ENCODE measurements at regions of chr1 and their contacts with region 1.

Region 1: DNA sequence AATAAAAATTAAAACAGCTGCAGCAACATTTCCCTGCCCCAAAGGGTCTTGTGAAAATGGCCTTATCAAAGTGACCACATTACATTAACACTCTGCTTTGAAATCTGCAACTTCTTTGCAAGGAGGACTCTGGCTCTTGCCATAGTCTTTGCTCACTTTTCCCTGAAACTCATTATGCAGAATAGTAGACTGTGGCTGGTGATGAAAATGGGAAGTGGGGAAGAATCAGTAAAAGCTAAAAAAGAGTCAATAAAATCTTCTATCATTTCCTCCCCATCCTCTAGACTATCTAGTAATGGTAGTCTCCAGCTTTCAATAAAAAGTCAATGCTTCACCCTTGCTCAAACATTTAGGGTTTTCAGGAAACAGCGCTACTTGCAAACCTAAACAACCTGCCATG is 18.6 kb upstream of the NUP133 start:
- DNase-seq: no peak
- H3K4me3 ChIP-seq: no peak overlapping the region
- CTCF ChIP-seq: no peak
- POLR2A ChIP-seq: no peak

Region 2: DNA sequence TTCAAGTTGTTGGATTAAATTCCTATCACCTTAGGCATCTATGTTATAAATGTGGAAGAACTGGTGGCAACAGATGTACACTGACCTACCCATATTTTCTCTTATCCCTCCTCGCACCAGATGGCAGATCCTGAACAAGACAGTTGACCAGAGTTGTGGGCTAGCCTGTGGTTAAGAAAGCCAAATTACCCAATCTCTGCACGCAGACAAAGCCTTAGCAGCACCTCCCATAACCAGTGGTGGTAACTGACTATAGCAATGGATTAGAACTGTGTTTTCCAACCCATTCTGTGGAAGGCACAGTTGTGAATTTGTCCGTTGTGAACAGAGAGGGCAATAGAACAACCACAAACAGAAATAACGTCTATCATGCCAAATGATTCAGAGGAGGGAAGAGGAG is 11.2 kb after region 1 on chr1:
- intact Hi-C with region 1: loop called (anchors 2 kb)
- DNase-seq: peak in 1 of 2 donors; percentile 9
- H3K4me3 ChIP-seq: no peak overlapping the region
- CTCF ChIP-seq: no peak
- POLR2A ChIP-seq: no peak

Region 3: DNA sequence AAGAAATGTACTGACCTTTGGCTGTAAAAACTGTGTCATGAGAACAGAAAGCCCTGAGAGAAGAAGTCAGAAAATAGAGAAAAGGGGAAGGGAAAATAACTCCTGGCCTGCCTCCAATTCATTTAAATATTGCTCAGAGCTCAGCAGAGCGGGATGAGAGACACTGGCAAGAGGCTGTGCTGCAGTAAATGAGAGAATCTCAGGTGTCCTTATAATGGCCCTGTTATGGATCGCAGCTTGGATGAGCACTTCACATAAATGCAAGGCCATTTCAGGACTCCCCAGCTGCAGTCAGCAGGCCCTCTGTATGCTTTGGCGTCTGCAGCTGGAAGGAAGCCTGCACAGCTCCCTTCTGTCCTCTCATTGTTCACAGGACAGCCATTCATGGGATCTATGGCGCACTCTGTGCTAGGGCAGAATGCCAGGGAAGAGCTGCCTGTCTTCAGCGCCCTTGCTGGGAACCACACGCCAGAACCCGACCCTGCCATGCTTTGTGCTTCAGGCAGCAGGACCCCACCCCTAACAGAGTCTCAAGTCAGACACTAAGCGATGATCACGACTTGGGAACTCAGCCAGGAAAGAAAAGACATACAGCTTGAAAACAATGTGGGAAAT is 52.5 kb after region 1 on chr1:
- intact Hi-C with region 1: no loop called
- DNase-seq: peak in 1 of 2 donors; percentile 37
- H3K4me3 ChIP-seq: no peak overlapping the region
- CTCF ChIP-seq: no peak
- POLR2A ChIP-seq: no peak

Measured in lower leg skin (tissue), 4 donors.